ENCODE measurements at regions of chr16 and their contacts with region 1.

Region 1: GRCh38 chr16:50152807-50153452 is at the start of gene TENT4B:
- DNase-seq: peak; percentile 97
- H3K4me3 Mint-ChIP-seq: peak within 1 kb of the TSS; percentile 88
- H3K27ac Mint-ChIP-seq: peak within 1 kb of the TSS; percentile 94
- H3K4me1 Mint-ChIP-seq: peaks cover 30% of the 10 kb centered on the region
- H3K27me3 Mint-ChIP-seq: no peaks in the 10 kb centered on the region
- total RNA-seq, gene TENT4B: 16.6 and 18.5 TPM in 2 replicates

Region 2: DNA sequence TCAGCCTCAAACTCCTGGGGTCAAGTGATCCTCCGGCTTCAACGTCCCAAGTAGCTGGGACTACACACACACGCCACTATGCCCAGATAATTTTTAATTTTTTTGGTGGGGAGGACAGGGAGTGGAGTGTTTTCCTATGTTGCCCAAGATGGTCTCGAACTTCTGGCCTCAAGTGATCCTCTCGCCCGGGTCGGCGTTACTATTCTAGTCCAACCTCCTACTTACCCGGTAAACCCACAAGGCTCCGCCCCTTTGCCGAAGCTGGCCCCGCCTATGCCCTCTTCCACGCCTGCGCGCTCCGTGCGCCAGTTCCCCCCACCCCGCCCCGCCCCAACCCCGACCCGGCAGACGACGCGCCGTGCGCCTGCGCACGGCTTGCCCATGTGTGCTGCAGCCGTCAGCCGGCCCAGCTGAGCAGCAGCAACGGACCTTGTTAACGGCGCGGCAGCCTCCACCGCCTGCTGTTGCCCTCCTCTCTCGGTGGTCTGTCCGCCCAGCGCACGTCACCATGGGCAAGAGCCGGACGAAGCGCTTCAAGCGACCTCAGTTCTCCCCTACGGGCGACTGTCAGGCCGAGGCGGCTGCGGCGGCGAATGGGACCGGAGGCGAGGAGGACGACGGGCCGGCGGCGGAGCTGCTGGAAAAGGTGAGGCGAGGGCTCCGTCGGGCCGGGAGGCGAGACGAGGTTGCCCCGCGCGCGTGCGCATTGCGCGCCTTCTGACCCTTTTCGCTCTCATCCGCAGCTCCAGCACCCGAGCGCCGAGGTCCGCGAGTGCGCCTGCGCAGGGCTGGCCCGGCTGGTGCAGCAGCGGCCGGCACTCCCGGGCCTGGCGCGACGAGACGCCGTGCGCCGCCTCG is 87.1 kb before region 1 on chr16 and contains the start of gene HEATR3:
- intact Hi-C with region 1: loop called (anchors 1 kb)
- DNase-seq: peak; percentile 99
- H3K4me3 Mint-ChIP-seq: peak within 1 kb of the TSS; percentile 84
- H3K27ac Mint-ChIP-seq: peak within 1 kb of the TSS; percentile 94
- H3K4me1 Mint-ChIP-seq: peaks cover 29% of the 10 kb centered on the region
- H3K27me3 Mint-ChIP-seq: no peaks in the 10 kb centered on the region
- total RNA-seq, gene HEATR3: 28.5 and 29.2 TPM in 2 replicates

Region 3: GRCh38 chr16:50121721-50122445 is 31.0 kb before region 1 on chr16:
- intact Hi-C with region 1: loop called (anchors 1 kb)
- DNase-seq: peak; percentile 88
- H3K4me3 Mint-ChIP-seq: peak overlapping the region; percentile 42
- H3K27ac Mint-ChIP-seq: peak overlapping the region; percentile 83
- H3K4me1 Mint-ChIP-seq: peaks cover 41% of the 10 kb centered on the region
- H3K27me3 Mint-ChIP-seq: no peaks in the 10 kb centered on the region

Region 4: GRCh38 chr16:50273681-50274325 is 120.9 kb after region 1 on chr16:
- intact Hi-C with region 1: loop called (anchors 5 kb)
- DNase-seq: peak; percentile 82
- H3K4me3 Mint-ChIP-seq: peak overlapping the region; percentile 99
- H3K27ac Mint-ChIP-seq: peak overlapping the region; percentile 99
- H3K4me1 Mint-ChIP-seq: peaks cover 83% of the 10 kb centered on the region
- H3K27me3 Mint-ChIP-seq: no peaks in the 10 kb centered on the region

Region 5: DNA sequence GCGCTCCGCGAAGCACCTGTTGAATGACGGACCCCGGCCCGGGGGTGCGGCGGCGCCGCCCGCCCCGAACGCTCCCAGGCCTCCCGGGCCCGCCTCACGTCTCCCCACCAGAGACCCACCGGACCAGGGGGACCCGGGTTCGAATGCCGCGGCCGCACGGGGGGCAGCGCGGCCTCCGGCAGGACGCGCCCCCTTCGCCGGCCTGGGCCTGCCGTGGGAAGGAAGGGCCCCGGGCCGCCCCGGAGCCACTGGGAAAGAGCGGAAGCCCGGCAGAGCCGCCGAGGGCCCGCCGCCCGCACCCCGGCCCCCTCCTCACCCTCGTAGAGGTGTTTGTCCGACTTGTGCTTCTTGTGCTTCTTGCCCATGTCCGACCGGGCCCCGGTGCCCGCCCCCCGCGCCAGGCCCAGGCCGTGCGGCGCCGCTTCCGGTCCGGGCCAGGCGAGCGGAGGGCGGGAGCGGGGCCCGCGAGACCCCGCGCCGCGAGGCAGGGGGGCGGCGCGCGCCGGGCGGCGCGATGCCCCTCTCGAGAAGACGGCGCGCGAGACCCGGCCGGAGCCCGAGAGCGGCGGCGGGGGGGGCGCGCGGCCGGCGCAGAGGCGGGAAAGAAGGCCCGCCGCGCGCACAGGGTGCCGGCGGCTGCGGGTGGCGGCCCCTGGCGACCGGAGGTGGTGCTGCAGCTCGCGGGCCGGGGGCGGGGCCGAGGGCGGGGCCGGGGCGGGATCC is 215.6 kb after region 1 on chr16 and contains the start of gene BRD7:
- intact Hi-C with region 1: loop called (anchors 2 kb)
- DNase-seq: peak; percentile 89
- H3K4me3 Mint-ChIP-seq: peak within 1 kb of the TSS; percentile 92
- H3K27ac Mint-ChIP-seq: peak within 1 kb of the TSS; percentile 91
- H3K4me1 Mint-ChIP-seq: peaks cover 41% of the 10 kb centered on the region
- H3K27me3 Mint-ChIP-seq: peaks cover 3% of the 10 kb centered on the region
- total RNA-seq, gene BRD7: 92.7 and 98.8 TPM in 2 replicates